Caco-2 (cell line): ENCODE measurements at regions of chr1 and their contacts with region 1.

Region 1: GRCh38 chr1:85200870-85201339 is at the start of gene SYDE2:
- DNase-seq: peak; percentile 86 to 90
- H3K4me3 ChIP-seq: peak within 1 kb of the TSS; percentile 74
- H3K4me3 Mint-ChIP-seq: peak within 1 kb of the TSS; percentile 82
- H3K27ac Mint-ChIP-seq: peak within 1 kb of the TSS; percentile 91
- H3K4me1 ChIP-seq: peaks cover 17% of the 10 kb centered on the region
- H3K4me1 Mint-ChIP-seq: no peaks in the 10 kb centered on the region
- H3K27me3 ChIP-seq: no peaks in the 10 kb centered on the region
- H3K27me3 Mint-ChIP-seq: no peaks in the 10 kb centered on the region
- CTCF ChIP-seq: no peak
- total RNA-seq, gene SYDE2: 19.1 and 19.9 TPM in 2 replicates

Region 2: GRCh38 chr1:85048296-85049064 is 152.4 kb before region 1 on chr1 and contains the start of gene MCOLN3:
- CTCF ChIA-PET with region 1: no interaction called
- POLR2A ChIA-PET with region 1: no interaction called
- intact Hi-C with region 1: no loop called
- DNase-seq: peak; percentile 31 to 42
- H3K4me3 ChIP-seq: peak within 1 kb of the TSS; percentile 42
- H3K4me3 Mint-ChIP-seq: peak within 1 kb of the TSS; percentile 70
- H3K27ac Mint-ChIP-seq: no peak within 1 kb of the TSS
- H3K4me1 ChIP-seq: no peaks in the 10 kb centered on the region
- H3K4me1 Mint-ChIP-seq: peaks cover 6% of the 10 kb centered on the region
- H3K27me3 ChIP-seq: no peaks in the 10 kb centered on the region
- H3K27me3 Mint-ChIP-seq: peaks cover 6% of the 10 kb centered on the region
- CTCF ChIP-seq: no peak
- total RNA-seq, gene MCOLN3: 2.1 and 2.5 TPM in 2 replicates

Region 3: DNA sequence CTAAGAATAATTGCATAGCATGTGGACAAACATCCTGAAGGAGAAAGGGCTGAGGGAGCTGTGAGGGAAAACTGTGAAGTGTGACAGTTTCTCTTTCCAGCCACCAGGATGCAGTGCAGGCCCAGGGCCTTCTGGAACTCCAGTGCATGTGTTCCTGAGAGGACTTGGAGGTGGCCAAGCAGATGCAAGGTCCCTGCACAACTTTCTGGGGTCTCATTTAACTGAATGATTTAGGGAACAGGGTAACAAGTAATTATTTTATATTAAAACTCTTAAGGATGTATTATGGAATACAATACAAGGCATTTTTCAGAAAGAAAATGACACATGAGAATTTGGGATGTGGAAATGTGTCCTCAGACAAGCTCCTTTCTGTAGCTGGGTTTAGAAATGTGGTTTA is 91.4 kb before region 1 on chr1:
- CTCF ChIA-PET with region 1: no interaction called
- POLR2A ChIA-PET with region 1: no interaction called
- intact Hi-C with region 1: loop called (anchors 2 kb)
- DNase-seq: peak; percentile 51 to 57
- H3K4me3 ChIP-seq: no peak overlapping the region
- H3K4me3 Mint-ChIP-seq: no peak overlapping the region
- H3K27ac Mint-ChIP-seq: no peak overlapping the region
- H3K4me1 ChIP-seq: no peaks in the 10 kb centered on the region
- H3K4me1 Mint-ChIP-seq: peaks cover 5% of the 10 kb centered on the region
- H3K27me3 ChIP-seq: no peaks in the 10 kb centered on the region
- H3K27me3 Mint-ChIP-seq: peaks cover 3% of the 10 kb centered on the region
- CTCF ChIP-seq: peak; percentile 66 to 80

Region 4: GRCh38 chr1:85148524-85149250 is 52.2 kb before region 1 on chr1:
- CTCF ChIA-PET with region 1: no interaction called
- POLR2A ChIA-PET with region 1: no interaction called
- intact Hi-C with region 1: loop called (anchors 5 kb)
- DNase-seq: no peak
- H3K4me3 ChIP-seq: no peak overlapping the region
- H3K4me3 Mint-ChIP-seq: no peak overlapping the region
- H3K27ac Mint-ChIP-seq: no peak overlapping the region
- H3K4me1 ChIP-seq: peaks cover 25% of the 10 kb centered on the region
- H3K4me1 Mint-ChIP-seq: peaks cover 31% of the 10 kb centered on the region
- H3K27me3 ChIP-seq: no peaks in the 10 kb centered on the region
- H3K27me3 Mint-ChIP-seq: no peaks in the 10 kb centered on the region
- CTCF ChIP-seq: no peak

Region 5: GRCh38 chr1:85172684-85173337 is 28.1 kb before region 1 on chr1:
- CTCF ChIA-PET with region 1: no interaction called
- POLR2A ChIA-PET with region 1: no interaction called
- intact Hi-C with region 1: no loop called
- DNase-seq: no peak
- H3K4me3 ChIP-seq: no peak overlapping the region
- H3K4me3 Mint-ChIP-seq: no peak overlapping the region
- H3K27ac Mint-ChIP-seq: peak overlapping the region; percentile 8
- H3K4me1 ChIP-seq: no peaks in the 10 kb centered on the region
- H3K4me1 Mint-ChIP-seq: peaks cover 5% of the 10 kb centered on the region
- H3K27me3 ChIP-seq: no peaks in the 10 kb centered on the region
- H3K27me3 Mint-ChIP-seq: no peaks in the 10 kb centered on the region
- CTCF ChIP-seq: no peak

Region 6: GRCh38 chr1:85224734-85225623 is 24.1 kb after region 1 on chr1:
- CTCF ChIA-PET with region 1: no interaction called
- POLR2A ChIA-PET with region 1: interaction called, 5 read pairs
- intact Hi-C with region 1: loop called (anchors 1 kb)
- DNase-seq: peak; percentile 90 to 95
- H3K4me3 ChIP-seq: no peak overlapping the region
- H3K4me3 Mint-ChIP-seq: peak overlapping the region; percentile 66
- H3K27ac Mint-ChIP-seq: peak overlapping the region; percentile 93
- H3K4me1 ChIP-seq: peaks cover 53% of the 10 kb centered on the region
- H3K4me1 Mint-ChIP-seq: peaks cover 41% of the 10 kb centered on the region
- H3K27me3 ChIP-seq: no peaks in the 10 kb centered on the region
- H3K27me3 Mint-ChIP-seq: no peaks in the 10 kb centered on the region
- CTCF ChIP-seq: no peak

Region 7: GRCh38 chr1:85240174-85240601 is 39.3 kb after region 1 on chr1:
- CTCF ChIA-PET with region 1: no interaction called
- POLR2A ChIA-PET with region 1: no interaction called
- intact Hi-C with region 1: loop called (anchors 1 kb)
- DNase-seq: peak; percentile 37 to 40
- H3K4me3 ChIP-seq: no peak overlapping the region
- H3K4me3 Mint-ChIP-seq: no peak overlapping the region
- H3K27ac Mint-ChIP-seq: no peak overlapping the region
- H3K4me1 ChIP-seq: peaks cover 30% of the 10 kb centered on the region
- H3K4me1 Mint-ChIP-seq: peaks cover 6% of the 10 kb centered on the region
- H3K27me3 ChIP-seq: no peaks in the 10 kb centered on the region
- H3K27me3 Mint-ChIP-seq: no peaks in the 10 kb centered on the region
- CTCF ChIP-seq: no peak

Region 8: DNA sequence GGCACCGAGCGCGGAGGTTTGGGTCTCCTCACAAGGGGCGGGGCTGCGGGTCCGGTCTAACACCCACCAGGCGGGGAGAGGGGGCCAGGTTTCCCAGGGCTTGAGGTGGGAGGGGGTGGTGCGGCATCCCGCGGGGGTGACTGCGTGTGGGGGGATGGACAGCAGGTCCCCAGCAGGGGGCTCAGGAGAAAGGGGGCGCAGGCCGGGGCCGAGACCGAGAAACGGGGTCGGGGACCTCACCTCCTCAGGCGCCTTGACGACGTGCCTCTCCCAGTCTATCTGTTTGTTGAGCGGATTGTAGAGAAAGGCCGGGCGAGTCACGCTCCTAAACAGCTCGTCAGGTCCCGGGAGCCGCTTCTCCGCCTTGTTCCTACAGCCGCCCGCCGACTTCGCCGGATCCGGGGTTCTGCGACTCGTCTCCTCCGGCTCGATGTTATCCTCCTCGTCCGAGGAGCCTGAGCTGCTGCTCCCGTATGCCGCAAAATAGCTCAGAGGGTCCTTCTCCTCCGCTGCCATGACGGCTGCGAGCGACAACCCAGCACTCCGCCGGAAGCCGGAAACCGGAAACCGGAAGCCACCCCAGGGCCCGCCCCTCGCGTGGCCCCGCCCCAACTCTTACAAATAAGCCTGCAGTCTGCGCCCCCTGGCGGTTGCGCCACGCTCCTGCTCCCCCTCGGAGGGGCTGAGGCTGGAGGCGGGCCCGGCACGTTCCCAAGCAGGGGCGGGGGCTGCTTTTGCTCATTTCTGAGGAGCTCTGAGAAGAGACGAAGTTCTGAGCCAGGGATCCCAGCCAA is 58.4 kb after region 1 on chr1 and contains the start of gene C1orf52:
- CTCF ChIA-PET with region 1: interaction called, 3 read pairs
- POLR2A ChIA-PET with region 1: interaction called, 3 read pairs
- intact Hi-C with region 1: loop called (anchors 2 kb)
- DNase-seq: peak; percentile 90 to 94
- H3K4me3 ChIP-seq: peak within 1 kb of the TSS; percentile 80
- H3K4me3 Mint-ChIP-seq: peak within 1 kb of the TSS; percentile 95
- H3K27ac Mint-ChIP-seq: peak within 1 kb of the TSS; percentile 87
- H3K4me1 ChIP-seq: no peaks in the 10 kb centered on the region
- H3K4me1 Mint-ChIP-seq: peaks cover 15% of the 10 kb centered on the region
- H3K27me3 ChIP-seq: no peaks in the 10 kb centered on the region
- H3K27me3 Mint-ChIP-seq: no peaks in the 10 kb centered on the region
- CTCF ChIP-seq: peak; percentile 75 to 86
- total RNA-seq, gene C1orf52: 30.4 and 30.7 TPM in 2 replicates

Region 9: DNA sequence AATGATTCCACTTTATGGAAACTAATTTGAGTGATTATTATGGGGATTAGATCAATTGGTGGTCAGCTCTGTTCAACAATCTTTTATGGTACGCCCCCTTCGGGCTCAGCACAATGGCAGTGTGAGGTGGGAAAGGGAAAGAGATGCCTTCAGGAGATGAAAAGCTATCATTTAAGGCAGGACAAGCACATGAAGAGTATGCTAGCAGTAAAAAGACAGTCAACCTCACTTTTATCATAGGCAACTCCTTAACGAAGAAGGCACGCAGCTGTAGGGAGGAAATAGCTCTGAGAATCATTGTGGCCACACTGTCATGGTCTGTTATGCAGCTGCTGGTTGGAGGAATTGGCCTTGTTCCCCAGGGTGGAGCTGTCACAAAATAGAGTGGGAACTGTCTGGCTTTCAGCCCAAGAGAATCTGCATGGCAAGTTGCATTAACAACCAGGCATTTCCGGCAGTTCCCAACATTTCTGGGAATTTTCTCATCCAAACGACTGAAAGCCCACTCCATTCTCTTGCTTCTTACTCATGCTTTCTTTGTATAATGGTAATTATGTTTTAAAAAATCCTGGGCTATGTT is 129.9 kb after region 1 on chr1:
- CTCF ChIA-PET with region 1: no interaction called
- POLR2A ChIA-PET with region 1: no interaction called
- intact Hi-C with region 1: no loop called
- DNase-seq: no peak
- H3K4me3 ChIP-seq: no peak overlapping the region
- H3K4me3 Mint-ChIP-seq: peak overlapping the region; percentile 46
- H3K27ac Mint-ChIP-seq: peak overlapping the region; percentile 89
- H3K4me1 ChIP-seq: peaks cover 55% of the 10 kb centered on the region
- H3K4me1 Mint-ChIP-seq: peaks cover 25% of the 10 kb centered on the region
- H3K27me3 ChIP-seq: no peaks in the 10 kb centered on the region
- H3K27me3 Mint-ChIP-seq: no peaks in the 10 kb centered on the region
- CTCF ChIP-seq: no peak